Heart right ventricle (tissue), 16 donors: ENCODE measurements at regions of chr12 and their contacts with region 1.

Region 1: GRCh38 chr12:57416039-57416996 is 14.5 kb downstream of the R3HDM2 start:
- DNase-seq: no peak
- ATAC-seq: no peak
- H3K4me3 ChIP-seq: no peak overlapping the region
- H3K27ac ChIP-seq: no peak overlapping the region
- H3K4me1 ChIP-seq: peaks cover 0 to 37% (median 13%) of the 10 kb centered on the region in 9 donors
- H3K27me3 ChIP-seq: no peaks in the 10 kb centered on the region
- CTCF ChIP-seq: no peak

Region 2: DNA sequence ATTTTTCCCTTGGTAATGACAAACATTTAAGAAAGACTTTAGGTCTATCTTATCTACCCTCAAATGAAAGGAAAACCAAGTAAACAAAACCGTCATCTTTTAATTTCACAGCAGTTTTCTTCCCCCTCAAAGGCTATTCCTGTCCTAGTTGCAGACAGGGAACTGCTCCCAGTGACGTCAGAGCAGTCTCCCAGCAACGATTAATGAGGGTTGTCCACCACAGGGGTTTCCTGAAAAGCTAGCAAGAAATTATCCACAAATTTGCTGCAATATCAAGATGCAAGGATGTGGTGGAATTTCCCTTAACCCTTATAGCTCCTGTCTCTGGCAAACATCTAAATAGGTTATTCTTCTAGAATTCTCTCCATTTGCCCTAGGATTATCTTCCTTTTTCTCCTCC is 76.2 kb before region 1 on chr12:
- intact Hi-C with region 1: loop called in 1 of 10 experiments (anchors 10 kb)
- DNase-seq: peak in 1 of 2 donors; percentile 84
- ATAC-seq: peak; percentile 75 to 92 (median 87)
- H3K4me3 ChIP-seq: peak overlapping the region in 1 of 10 donors; percentile 1
- H3K27ac ChIP-seq: peak overlapping the region in 7 of 10 donors; percentile 8 to 76 (median 63)
- H3K4me1 ChIP-seq: peaks cover 0 to 41% (median 33%) of the 10 kb centered on the region in 9 donors
- H3K27me3 ChIP-seq: no peaks in the 10 kb centered on the region
- CTCF ChIP-seq: no peak

Region 3: GRCh38 chr12:57539134-57539768 is 122.9 kb after region 1 on chr12:
- intact Hi-C with region 1: loop called in 1 of 10 experiments (anchors 5 kb)
- DNase-seq: no peak
- ATAC-seq: no peak
- H3K4me3 ChIP-seq: no peak overlapping the region
- H3K27ac ChIP-seq: no peak overlapping the region
- H3K4me1 ChIP-seq: peaks cover 0 to 10% (median 8%) of the 10 kb centered on the region in 9 donors
- H3K27me3 ChIP-seq: no peaks in the 10 kb centered on the region
- CTCF ChIP-seq: no peak

Region 4: GRCh38 chr12:57621497-57622292 is 205.4 kb after region 1 on chr12:
- intact Hi-C with region 1: no loop called
- DNase-seq: peak; percentile 61 to 75
- ATAC-seq: peak; percentile 64 to 79 (median 72)
- H3K4me3 ChIP-seq: peak overlapping the region; percentile 4 to 60 (median 52)
- H3K27ac ChIP-seq: peak overlapping the region in 2 of 10 donors; percentile 11 to 31
- H3K4me1 ChIP-seq: peaks cover 9 to 50% (median 21%) of the 10 kb centered on the region in 9 donors
- H3K27me3 ChIP-seq: peaks cover 11 to 96% (median 67%) of the 10 kb centered on the region in 7 donors
- CTCF ChIP-seq: peak; percentile 88 to 98 (median 95)